PC-3 (cell line): ENCODE measurements at regions of chr19 and their contacts with region 1.

Region 1: DNA sequence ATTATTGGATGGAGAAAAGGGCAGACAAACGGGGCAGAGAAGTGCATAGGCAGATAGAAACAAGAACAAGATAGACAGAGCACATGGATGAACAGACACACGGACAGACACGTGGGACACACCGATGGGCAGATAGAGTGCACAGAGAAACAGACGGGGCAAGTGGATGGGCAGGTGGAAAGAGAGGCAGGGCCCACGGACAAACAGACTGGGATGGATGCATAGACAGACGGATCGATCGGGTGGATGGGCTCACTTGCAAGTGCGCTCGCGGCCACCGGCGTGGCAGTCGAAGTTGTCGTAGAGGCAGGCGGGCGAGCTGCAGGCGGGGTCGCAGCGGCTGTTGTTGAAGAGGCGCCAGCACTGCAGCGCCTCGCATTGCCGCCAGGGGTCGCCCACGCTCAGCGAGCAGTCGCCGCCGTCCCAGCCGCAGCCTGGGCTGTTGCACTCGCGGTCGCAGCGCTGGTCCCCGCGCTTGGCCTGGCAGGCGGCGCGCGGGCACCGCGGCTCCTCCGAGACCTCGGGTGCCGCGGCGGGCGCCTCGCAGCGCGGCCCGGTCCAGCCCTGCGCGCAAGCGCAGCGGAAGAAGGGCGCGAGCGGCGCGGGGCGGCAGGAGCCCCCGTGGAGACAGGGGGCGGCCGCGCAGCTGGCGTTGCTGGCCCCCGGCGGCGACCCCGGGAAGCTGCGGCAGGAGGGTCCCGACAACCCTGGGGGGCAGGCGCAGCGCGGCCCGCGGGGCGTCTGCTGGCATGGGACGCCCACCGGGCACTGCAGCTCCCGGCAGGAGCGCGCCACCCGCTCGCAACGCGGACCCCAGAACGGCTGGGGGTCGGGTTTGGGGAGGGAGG is 23.3 kb downstream of the NOTCH3 start:
- DNase-seq: peak; percentile 86
- ATAC-seq: peak; percentile 87
- H3K4me3 ChIP-seq: peak overlapping the region; percentile 49; the same call in 1 of the 2 replicates
- H3K27ac ChIP-seq: no peak overlapping the region
- H3K4me1 ChIP-seq: no peaks in the 10 kb centered on the region; the same call in 1 of the 2 replicates
- H3K27me3 ChIP-seq: no peaks in the 10 kb centered on the region
- CTCF ChIP-seq: peak; percentile 84

Region 2: DNA sequence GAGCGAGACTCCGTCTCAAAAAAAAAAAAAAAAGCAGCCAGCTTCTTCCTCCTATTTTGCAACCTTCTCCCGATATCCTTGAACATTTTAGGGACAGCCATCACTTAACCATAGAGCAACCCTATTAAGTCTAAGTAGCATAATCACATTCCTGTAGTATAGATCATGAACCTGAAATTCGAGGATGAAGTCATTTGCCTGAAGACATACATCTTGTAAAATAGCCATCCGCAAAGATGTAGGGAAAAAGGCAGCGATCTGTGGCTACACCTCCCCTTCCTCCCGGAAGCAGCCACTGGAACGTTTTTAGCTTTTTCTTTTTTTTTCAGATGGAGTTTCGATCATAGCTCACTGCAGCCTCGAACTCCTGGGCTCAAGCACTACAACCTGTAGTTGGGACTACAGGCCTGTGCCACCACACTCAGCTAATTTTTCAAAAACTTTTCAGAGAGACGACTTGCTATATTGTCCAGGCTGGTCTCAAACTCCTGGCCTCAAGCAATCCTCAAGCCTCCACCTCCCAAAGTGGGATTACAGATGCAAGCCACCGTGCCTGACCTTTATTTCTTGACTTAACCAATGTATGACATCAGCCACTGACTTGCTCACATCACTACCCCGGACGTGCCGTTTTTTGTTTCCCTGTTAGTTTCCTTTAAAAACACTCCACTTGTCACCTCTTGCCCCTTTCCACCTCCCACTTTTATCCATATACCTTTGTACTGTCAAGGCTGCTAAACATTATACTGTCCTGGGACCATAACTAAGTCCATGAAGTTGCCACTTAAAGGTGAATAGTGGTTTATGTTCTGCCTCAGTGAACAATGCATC is 56.8 kb after region 1 on chr19:
- CTCF ChIA-PET with region 1: no interaction called
- POLR2A ChIA-PET with region 1: no interaction called
- intact Hi-C with region 1: loop called (anchors 5 kb)
- DNase-seq: peak; percentile 93
- ATAC-seq: peak; percentile 80
- H3K4me3 ChIP-seq: no peak overlapping the region
- H3K27ac ChIP-seq: peak overlapping the region; percentile 92
- H3K4me1 ChIP-seq: peaks cover 22% of the 10 kb centered on the region
- H3K27me3 ChIP-seq: no peaks in the 10 kb centered on the region
- CTCF ChIP-seq: no peak